ENCODE measurements at regions of chr12 and their contacts with region 1.

Region 1: DNA sequence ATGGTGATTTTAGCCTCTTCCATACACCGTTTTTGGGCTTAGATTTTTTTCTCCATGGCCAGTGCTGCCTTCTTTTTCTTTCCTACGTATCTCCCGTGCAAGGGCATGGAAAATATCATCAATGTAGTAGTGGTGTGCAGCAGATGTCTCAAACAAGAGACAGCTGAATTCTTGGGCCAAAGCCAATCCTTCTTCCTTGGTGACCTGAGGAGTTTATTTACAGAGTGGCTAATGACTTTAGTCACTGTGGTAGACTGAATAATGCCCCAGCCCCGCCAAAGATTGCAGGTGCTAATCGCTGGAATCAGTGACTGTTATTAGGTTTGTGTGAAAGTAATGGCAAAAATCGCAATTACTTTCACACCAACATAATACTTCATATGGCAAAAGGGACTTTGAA is 235.5 kb upstream of the NOS1 start:
- DNase-seq: no peak
- H3K4me3 ChIP-seq: no peak overlapping the region
- H3K27ac ChIP-seq: no peak overlapping the region
- H3K4me1 ChIP-seq: no peaks in the 10 kb centered on the region
- H3K27me3 ChIP-seq: no peaks in the 10 kb centered on the region
- CTCF ChIP-seq: no peak
- POLR2A ChIP-seq: no peak

Region 2: DNA sequence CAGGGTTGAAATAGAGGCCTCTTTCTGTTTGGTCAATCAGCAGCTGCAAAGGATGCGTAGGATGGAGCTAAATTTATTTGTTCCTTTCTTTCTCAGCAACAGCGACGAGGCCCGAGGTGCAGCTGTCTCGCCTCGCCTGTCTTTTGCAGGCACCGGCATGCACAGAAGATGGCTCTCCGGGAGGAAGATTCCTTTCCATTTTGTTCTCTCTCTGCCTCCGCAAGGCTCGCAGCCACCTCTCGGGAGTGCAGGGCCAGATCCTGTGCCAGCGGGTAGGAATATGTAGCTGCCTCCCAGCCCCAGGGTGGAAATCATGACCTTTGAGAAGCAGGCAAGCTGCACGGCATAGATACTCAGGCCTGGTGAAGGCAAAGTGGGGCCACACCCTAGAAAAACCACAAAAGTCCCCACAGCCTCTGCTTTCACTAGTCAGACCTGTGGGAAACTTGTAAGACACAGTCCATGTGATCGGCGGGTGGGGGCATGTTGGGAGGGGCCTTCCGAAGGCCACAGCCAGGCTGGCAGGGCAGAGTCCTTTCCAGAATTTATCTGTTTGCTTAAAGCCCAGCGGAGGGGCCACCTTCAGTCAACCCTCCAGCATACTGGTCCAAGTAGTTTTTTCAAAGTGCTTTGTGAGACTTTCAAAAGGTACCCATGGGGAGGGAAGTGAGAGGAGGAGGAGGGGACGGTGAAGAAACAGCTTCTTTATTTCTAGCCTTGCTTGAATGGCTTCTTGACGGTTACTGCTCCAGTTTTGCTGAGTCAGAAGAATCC is 1037.6 kb before region 1 on chr12 and contains the start of gene MAP1LC3B2:
- intact Hi-C with region 1: no loop called
- DNase-seq: peak in 1 of 2 donors; percentile 79
- H3K4me3 ChIP-seq: peak within 1 kb of the TSS in 2 of 3 donors; percentile 13 to 44
- H3K27ac ChIP-seq: peak within 1 kb of the TSS; percentile 87
- H3K4me1 ChIP-seq: peaks cover 3 to 5% of the 10 kb centered on the region in 2 donors
- H3K27me3 ChIP-seq: no peaks in the 10 kb centered on the region
- CTCF ChIP-seq: no peak
- POLR2A ChIP-seq: no peak
- total RNA-seq, gene MAP1LC3B2: 0.98 to 8.5 (median 1.1) TPM

Region 3: DNA sequence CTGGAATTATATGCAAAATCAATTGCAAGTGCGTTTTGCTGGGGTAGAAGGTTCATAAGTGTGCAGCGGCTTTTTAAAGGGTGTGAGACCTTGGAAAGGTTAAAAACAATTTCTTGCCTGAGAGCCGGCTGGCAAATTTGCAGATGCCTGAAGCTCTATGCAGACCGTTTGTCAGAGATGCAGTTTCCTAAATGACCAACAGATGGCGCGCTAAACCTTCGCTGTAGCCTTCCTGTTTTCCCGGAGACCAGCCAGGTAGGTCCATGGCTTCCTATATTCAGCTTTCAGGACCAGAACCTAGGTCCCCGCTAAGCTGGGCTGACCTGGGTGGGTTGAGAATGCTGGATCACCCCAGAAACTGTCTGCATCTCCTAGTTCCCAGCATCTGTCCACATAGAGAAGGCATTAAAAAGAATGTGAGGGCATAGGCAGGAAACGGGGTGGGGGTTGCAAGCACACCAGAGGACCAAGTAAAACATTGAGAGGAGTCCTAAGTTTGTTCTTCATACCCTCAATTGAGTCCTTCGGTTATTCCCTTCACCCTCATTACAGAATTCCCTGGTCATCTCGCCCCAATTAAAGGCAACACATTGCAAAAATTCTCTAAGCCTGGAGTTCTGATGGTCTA is 229.8 kb before region 1 on chr12:
- intact Hi-C with region 1: loop called (anchors 10 kb)
- DNase-seq: peak; percentile 58 to 77
- H3K4me3 ChIP-seq: no peak overlapping the region
- H3K27ac ChIP-seq: no peak overlapping the region
- H3K4me1 ChIP-seq: no peaks in the 10 kb centered on the region
- H3K27me3 ChIP-seq: peaks cover 0 to 42% of the 10 kb centered on the region in 2 donors
- CTCF ChIP-seq: peak; percentile 58 to 88 (median 85)
- POLR2A ChIP-seq: no peak

Region 4: DNA sequence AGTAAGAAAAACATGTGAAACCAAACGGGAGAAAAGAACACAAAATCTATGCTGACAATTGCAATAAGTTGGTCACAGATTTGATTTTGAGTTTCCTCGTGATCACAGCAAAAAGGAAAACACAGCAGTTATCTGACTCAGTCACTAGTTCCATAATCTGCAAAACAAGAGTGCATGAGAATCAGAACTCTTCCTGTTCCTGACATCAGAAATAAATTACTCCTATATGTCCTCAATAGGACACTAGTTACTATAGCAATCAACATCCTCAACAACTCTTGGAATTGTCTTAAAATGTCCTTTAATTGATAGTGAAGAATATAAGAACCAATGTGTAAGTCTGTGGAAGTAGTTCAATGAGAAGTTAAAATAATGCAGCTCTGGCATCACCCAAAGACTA is 32.5 kb after region 1 on chr12:
- intact Hi-C with region 1: loop called (anchors 5 kb)
- DNase-seq: no peak
- H3K4me3 ChIP-seq: no peak overlapping the region
- H3K27ac ChIP-seq: no peak overlapping the region
- H3K4me1 ChIP-seq: no peaks in the 10 kb centered on the region
- H3K27me3 ChIP-seq: no peaks in the 10 kb centered on the region
- CTCF ChIP-seq: no peak
- POLR2A ChIP-seq: no peak

Measured in breast epithelium (tissue), 4 donors.